H1 (cell line): ENCODE measurements at regions of chr13 and their contacts with region 1.

Region 1: DNA sequence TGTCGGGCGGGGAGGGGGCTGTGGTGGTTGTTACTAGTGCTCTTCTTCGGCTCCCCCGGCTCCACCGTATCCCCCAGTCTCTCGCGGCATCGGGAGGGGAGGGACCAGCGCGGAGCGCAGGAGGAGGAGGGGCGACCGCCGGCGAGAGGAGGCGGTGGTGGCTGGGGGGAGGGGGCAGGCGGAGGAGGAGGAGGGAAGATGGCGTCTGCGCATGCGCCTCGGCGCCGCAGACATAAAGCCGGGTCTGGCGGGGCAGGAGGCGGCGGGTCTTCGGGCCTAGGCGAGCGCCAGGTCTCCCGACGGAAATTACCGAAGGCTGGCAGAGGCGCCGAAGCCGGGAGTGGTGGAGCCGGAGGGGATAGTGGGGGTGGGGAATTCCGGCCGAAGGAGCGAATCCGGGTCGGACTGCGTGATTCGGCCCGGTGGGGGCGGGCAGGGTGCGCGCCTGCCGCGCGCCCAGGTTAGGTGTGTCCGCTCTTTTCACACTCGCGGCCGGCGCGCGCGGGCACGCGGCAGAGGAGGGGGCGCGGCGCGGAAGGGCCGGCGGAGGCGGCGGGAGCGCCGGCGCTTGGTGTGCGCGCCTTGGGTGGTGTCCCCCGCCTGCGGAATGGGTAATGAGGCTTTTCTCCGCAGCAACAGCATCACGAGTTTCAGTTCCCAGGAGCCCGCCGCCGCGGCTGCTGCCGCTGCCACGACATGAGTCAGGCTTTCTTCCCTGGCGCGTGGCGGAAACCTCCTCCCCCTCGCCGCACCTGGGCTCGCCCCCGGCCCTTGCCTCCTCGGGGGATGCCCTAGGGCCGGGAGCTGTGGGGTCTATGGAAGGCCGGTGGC is 1.3 kb upstream of the TSC22D1 start:
- DNase-seq: peak; percentile 95 to 97
- H3K4me3 ChIP-seq: peak overlapping the region; percentile 77 to 96 (median 92)
- H3K27ac ChIP-seq: peak overlapping the region; percentile 97
- H3K4me1 ChIP-seq: peaks cover 16 to 28% (median 18%) of the 10 kb centered on the region in 4 experiments; a peak in 6 of 7 replicates
- H3K27me3 ChIP-seq: no peaks in the 10 kb centered on the region
- CTCF ChIP-seq: no peak
- EP300 ChIP-seq: peak in 1 of 2 experiments; percentile 51; a peak in 1 of 3 replicates
- POLR2A ChIP-seq: peak; percentile 83 to 96
- RAD21 ChIP-seq: no peak

Region 2: DNA sequence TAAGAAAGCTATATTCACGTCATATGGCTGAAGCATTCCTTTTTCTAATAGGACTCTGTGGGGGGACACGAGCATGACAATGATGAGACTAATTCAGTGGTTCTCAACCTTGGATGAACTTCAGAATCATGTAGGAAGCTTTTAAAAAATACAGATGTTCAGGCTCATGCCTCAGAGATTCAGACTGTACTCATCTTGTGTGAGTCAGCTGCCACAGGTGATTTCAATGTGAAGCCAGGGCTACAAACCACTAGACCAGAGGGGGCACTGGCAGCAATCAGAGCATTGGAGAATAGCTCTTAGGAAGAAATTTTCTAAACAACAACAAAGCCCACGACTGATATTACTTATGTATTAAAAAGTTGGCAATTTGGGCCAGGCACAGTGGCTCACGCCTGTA is 112.1 kb before region 1 on chr13:
- CTCF ChIA-PET with region 1: no interaction called
- POLR2A ChIA-PET with region 1: no interaction called
- DNase-seq: no peak
- H3K4me3 ChIP-seq: no peak overlapping the region
- H3K27ac ChIP-seq: 0 out of 2 replicates have a peak overlapping the region, but pooled peaks have one; percentile 32
- H3K4me1 ChIP-seq: peaks cover 0 to 7% (median 3%) of the 10 kb centered on the region in 4 experiments; a peak in 3 of 7 replicates
- H3K27me3 ChIP-seq: no peaks in the 10 kb centered on the region
- CTCF ChIP-seq: no peak
- EP300 ChIP-seq: no peak
- POLR2A ChIP-seq: no peak
- RAD21 ChIP-seq: no peak

Region 3: DNA sequence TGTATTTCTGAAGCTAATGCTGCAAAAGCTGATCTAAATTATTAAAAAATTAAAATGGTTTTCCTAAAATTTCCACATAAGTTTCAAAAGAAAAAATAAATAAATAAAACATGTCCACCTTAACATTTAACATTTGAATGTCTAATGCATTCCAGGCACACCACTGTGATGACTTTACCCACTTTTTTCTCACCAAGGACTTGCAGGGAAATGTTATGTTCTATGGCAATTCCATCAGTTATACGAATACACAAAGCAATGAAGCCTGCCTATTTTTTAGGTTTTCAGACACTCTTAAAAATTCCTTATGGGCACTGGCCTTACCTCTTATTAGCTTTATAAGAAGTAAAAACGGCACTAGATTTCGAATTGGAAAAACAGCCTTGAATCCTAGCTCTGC is 11.6 kb before region 1 on chr13:
- CTCF ChIA-PET with region 1: interaction called, 17 read pairs
- POLR2A ChIA-PET with region 1: interaction called, 18 read pairs
- DNase-seq: no peak
- H3K4me3 ChIP-seq: no peak overlapping the region
- H3K27ac ChIP-seq: no peak overlapping the region
- H3K4me1 ChIP-seq: peaks cover 0 to 13% (median 3%) of the 10 kb centered on the region in 4 experiments; a peak in 3 of 7 replicates
- H3K27me3 ChIP-seq: no peaks in the 10 kb centered on the region
- CTCF ChIP-seq: no peak
- EP300 ChIP-seq: no peak
- POLR2A ChIP-seq: no peak
- RAD21 ChIP-seq: no peak

Region 4: DNA sequence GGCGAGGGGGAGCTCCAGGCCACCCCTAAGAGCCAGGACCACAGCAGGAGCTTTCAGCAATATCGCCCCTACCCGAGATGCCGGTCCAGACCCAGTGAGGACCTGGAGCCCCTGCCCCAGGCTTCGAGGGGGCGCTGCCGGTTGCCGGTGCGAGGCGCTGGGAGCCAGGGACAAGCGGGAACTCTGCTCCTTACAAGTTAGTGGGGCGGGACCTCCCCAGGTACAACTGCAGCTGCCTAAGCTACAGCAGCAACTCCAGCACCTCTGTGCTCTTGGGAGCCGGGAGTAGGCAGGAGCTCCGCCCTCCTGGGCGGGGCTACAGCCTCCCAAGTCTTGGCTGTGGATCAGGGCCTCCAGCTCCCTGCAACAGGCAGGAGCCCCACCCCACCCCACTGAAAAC is 13.9 kb after region 1 on chr13:
- CTCF ChIA-PET with region 1: no interaction called
- POLR2A ChIA-PET with region 1: interaction called, 15 read pairs
- DNase-seq: peak in 1 of 2 experiments; percentile 77
- H3K4me3 ChIP-seq: no peak overlapping the region
- H3K27ac ChIP-seq: no peak overlapping the region
- H3K4me1 ChIP-seq: peaks cover 0 to 4% (median 1%) of the 10 kb centered on the region in 4 experiments; a peak in 2 of 7 replicates
- H3K27me3 ChIP-seq: no peaks in the 10 kb centered on the region
- CTCF ChIP-seq: no peak
- EP300 ChIP-seq: no peak
- POLR2A ChIP-seq: no peak
- RAD21 ChIP-seq: no peak